Activated CD4-positive, alpha-beta T cell treated with anti-CD3 and anti-CD28 coated beads, Interleukin-2, amount 10 ng/mL, durations not matched to agents 24 days and 14 days (primary cell): ENCODE measurements at regions of chr13 and their contacts with region 1.

Region 1: GRCh38 chr13:33204130-33204927 is 81.2 kb downstream of the STARD13 start:
- DNase-seq: no peak
- H3K4me3 Mint-ChIP-seq: peak overlapping the region; percentile 82
- H3K27ac Mint-ChIP-seq: peak overlapping the region; percentile 87
- H3K4me1 Mint-ChIP-seq: peaks cover 49% of the 10 kb centered on the region
- H3K27me3 Mint-ChIP-seq: no peaks in the 10 kb centered on the region

Region 2: DNA sequence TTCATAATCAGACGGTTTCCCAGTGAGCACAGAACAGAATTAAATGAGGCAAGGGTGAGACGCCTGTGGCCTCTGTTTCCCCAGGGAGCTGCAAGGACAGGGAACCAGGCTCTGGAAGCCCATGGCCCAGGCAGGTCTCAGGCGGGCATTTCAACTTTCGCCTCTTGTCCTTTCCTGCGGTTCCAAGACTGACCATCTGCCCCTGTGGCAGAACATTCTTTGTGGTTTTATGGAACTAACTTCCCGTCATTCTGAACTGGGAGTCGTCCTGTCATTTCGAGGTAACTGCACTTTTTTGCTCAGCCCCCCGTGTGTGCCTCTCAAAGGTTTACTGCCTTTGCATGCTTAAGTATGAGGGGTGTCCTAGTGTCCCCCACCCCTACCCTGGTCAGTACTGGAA is 117.2 kb before region 1 on chr13:
- intact Hi-C with region 1: loop called (anchors 5 kb)
- DNase-seq: no peak
- H3K4me3 Mint-ChIP-seq: peak overlapping the region; percentile 66
- H3K27ac Mint-ChIP-seq: peak overlapping the region; percentile 83
- H3K4me1 Mint-ChIP-seq: peaks cover 22% of the 10 kb centered on the region
- H3K27me3 Mint-ChIP-seq: peaks cover 2% of the 10 kb centered on the region

Region 3: GRCh38 chr13:33193428-33193974 is 10.8 kb before region 1 on chr13:
- intact Hi-C with region 1: loop called (anchors 1 kb)
- DNase-seq: peak; percentile 66
- H3K4me3 Mint-ChIP-seq: peak overlapping the region; percentile 48
- H3K27ac Mint-ChIP-seq: peak overlapping the region; percentile 94
- H3K4me1 Mint-ChIP-seq: peaks cover 26% of the 10 kb centered on the region
- H3K27me3 Mint-ChIP-seq: no peaks in the 10 kb centered on the region